ENCODE measurements at regions of chr5 and their contacts with region 1.

Region 1: DNA sequence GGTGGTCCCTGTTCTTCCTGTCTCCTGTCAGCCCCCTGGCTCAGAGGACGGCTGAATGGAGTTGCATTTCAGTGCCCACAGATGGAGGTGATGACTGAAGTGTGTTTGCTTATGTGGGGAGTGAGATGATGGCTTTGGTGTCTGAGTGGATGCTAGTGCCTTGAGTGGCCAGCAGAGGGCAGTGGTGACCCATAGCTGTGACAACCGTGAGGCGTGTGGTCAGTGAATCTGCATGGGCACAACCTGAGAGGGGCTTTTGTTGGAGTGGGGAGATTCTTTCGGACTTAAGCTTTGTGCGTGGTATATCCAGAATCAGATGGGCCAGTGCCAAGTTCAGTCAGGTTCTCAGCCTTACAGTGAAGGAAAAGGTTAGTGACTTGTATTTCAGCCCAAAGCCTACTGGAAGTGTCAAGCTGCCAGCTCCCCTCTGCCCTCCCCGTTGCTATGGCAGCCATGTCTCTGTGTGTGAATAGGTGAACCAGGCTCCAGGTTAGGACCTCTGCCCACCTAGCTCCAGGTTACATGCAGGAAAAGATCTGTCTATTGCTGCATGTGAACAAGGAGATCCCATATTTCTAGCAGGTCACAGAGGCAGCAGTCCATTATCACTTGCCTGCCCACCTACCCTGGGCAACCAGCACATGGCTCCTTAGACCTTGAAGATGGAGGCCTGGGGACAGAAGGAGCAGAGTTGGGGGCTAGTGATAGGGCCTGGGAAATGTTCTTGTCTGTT is 14.7 kb upstream of the CXXC5 start:
- DNase-seq: peak; percentile 39 to 62
- ATAC-seq: peak; percentile 13 to 27
- H3K4me3 ChIP-seq: no peak overlapping the region
- H3K27ac ChIP-seq: no peak overlapping the region
- H3K4me1 ChIP-seq: peaks cover 19 to 30% of the 10 kb centered on the region in 2 donors
- H3K27me3 ChIP-seq: no peaks in the 10 kb centered on the region
- CTCF ChIP-seq: peak; percentile 95 to 99 (median 98)
- POLR2A ChIP-seq: no peak

Region 2: GRCh38 chr5:139246394-139246793 is 387.1 kb before region 1 on chr5:
- in situ Hi-C with region 1: no loop called
- intact Hi-C with region 1: no loop called
- DNase-seq: no peak
- ATAC-seq: no peak
- H3K4me3 ChIP-seq: no peak overlapping the region
- H3K27ac ChIP-seq: no peak overlapping the region
- H3K4me1 ChIP-seq: no peaks in the 10 kb centered on the region
- H3K27me3 ChIP-seq: no peaks in the 10 kb centered on the region
- CTCF ChIP-seq: no peak
- POLR2A ChIP-seq: no peak

Region 3: GRCh38 chr5:139560752-139561654 is 72.5 kb before region 1 on chr5 and contains the start of gene UBE2D2:
- in situ Hi-C with region 1: no loop called
- intact Hi-C with region 1: no loop called
- DNase-seq: peak; percentile 93 to 96
- ATAC-seq: peak; percentile 84
- H3K4me3 ChIP-seq: peak within 1 kb of the TSS; percentile 77 to 94 (median 88)
- H3K27ac ChIP-seq: peak within 1 kb of the TSS; percentile 92 to 99 (median 97)
- H3K4me1 ChIP-seq: peaks cover 41 to 42% of the 10 kb centered on the region in 2 donors
- H3K27me3 ChIP-seq: no peaks in the 10 kb centered on the region
- CTCF ChIP-seq: peak in 1 of 5 experiments; percentile 9
- POLR2A ChIP-seq: peak; percentile 91 to 93
- total RNA-seq, gene UBE2D2: 98.5 to 199 (median 131) TPM

Region 4: DNA sequence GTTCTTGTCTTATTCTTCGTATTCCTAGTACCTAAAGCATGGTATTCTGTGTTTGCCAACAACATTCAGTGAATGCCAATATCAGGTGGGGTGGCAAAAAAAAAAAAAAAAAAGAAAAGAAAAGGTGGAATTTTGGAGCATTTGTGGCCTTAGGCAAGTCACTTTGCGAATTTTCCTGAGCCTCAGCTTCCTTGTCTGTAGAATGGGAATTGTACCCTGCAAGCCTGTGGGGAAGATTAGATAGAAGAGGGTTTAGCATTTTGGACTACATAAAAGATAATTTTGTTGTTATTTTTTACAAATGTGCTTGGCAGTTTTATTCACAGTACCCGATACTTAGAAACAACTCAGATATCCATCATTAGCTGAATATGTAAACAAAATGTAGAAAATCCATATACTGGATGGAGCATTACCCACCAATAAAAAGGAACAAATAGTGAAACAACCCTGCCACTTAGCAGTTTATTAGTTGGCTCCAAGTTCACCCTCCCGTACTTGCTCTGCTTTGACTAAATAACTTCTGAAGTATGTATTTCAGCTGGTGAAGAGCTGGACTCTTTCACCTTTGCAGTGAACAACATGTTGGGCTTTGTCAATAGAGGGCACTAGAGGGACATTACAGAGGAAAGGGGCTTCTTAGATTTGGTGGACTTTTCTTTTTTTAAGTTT is 58.7 kb before region 1 on chr5:
- in situ Hi-C with region 1: no loop called
- intact Hi-C with region 1: loop called (anchors 5 kb)
- DNase-seq: no peak
- ATAC-seq: peak; percentile 48 to 54
- H3K4me3 ChIP-seq: no peak overlapping the region
- H3K27ac ChIP-seq: peak overlapping the region; percentile 55 to 77 (median 72)
- H3K4me1 ChIP-seq: peaks cover 58 to 70% of the 10 kb centered on the region in 2 donors
- H3K27me3 ChIP-seq: no peaks in the 10 kb centered on the region
- CTCF ChIP-seq: peak; percentile 26 to 72 (median 36)
- POLR2A ChIP-seq: no peak

Region 5: GRCh38 chr5:139684881-139685749 is 51.7 kb after region 1 on chr5:
- in situ Hi-C with region 1: loop called (anchors 5 to 10 kb)
- intact Hi-C with region 1: loop called (anchors 1 kb)
- DNase-seq: peak; percentile 81 to 92
- ATAC-seq: peak; percentile 76 to 90
- H3K4me3 ChIP-seq: peak overlapping the region in 2 of 4 donors; percentile 9 to 16
- H3K27ac ChIP-seq: peak overlapping the region; percentile 97 to 99 (median 98)
- H3K4me1 ChIP-seq: peaks cover 57 to 66% of the 10 kb centered on the region in 2 donors
- H3K27me3 ChIP-seq: no peaks in the 10 kb centered on the region
- CTCF ChIP-seq: peak in 4 of 5 experiments; percentile 13 to 52 (median 36)
- POLR2A ChIP-seq: peak; percentile 45 to 78

Region 6: GRCh38 chr5:139696894-139697658 is 63.6 kb after region 1 on chr5:
- in situ Hi-C with region 1: loop called (anchors 5 to 10 kb)
- intact Hi-C with region 1: no loop called
- DNase-seq: no peak
- ATAC-seq: peak; percentile 37 to 42
- H3K4me3 ChIP-seq: peak overlapping the region; percentile 49 to 68 (median 60)
- H3K27ac ChIP-seq: peak overlapping the region; percentile 56 to 80 (median 78)
- H3K4me1 ChIP-seq: peaks cover 32 to 42% of the 10 kb centered on the region in 2 donors
- H3K27me3 ChIP-seq: no peaks in the 10 kb centered on the region
- CTCF ChIP-seq: no peak
- POLR2A ChIP-seq: no peak

Region 7: GRCh38 chr5:139765409-139766217 is 132.2 kb after region 1 on chr5:
- in situ Hi-C with region 1: loop called (anchors 5 kb)
- intact Hi-C with region 1: loop called (anchors 1 kb)
- DNase-seq: peak; percentile 43 to 48
- ATAC-seq: peak; percentile 88 to 92
- H3K4me3 ChIP-seq: peak overlapping the region; percentile 64 to 84 (median 72)
- H3K27ac ChIP-seq: peak overlapping the region in 1 of 4 donors; percentile 49
- H3K4me1 ChIP-seq: peaks cover 0 to 5% of the 10 kb centered on the region in 2 donors
- H3K27me3 ChIP-seq: peaks cover 9 to 12% (median 11%) of the 10 kb centered on the region in 3 donors
- CTCF ChIP-seq: peak; percentile 98 to 100 (median 99)
- POLR2A ChIP-seq: no peak